Activated CD4-positive, alpha-beta T cell treated with anti-CD3 and anti-CD28 coated beads, Interleukin-2, amount 10 ng/mL, durations not matched to agents 24 days and 14 days (primary cell): ENCODE measurements at regions of chr12 and their contacts with region 1.

Region 1: GRCh38 chr12:11581179-11581755 is 68.2 kb upstream of the ETV6 start:
- DNase-seq: peak; percentile 90
- H3K4me3 Mint-ChIP-seq: no peak overlapping the region
- H3K27ac Mint-ChIP-seq: no peak overlapping the region
- H3K4me1 Mint-ChIP-seq: peaks cover 26% of the 10 kb centered on the region
- H3K27me3 Mint-ChIP-seq: peaks cover 8% of the 10 kb centered on the region

Region 2: GRCh38 chr12:11431486-11431885 is 149.8 kb before region 1 on chr12:
- intact Hi-C with region 1: no loop called
- DNase-seq: no peak
- H3K4me3 Mint-ChIP-seq: no peak overlapping the region
- H3K27ac Mint-ChIP-seq: no peak overlapping the region
- H3K4me1 Mint-ChIP-seq: peaks cover 2% of the 10 kb centered on the region
- H3K27me3 Mint-ChIP-seq: peaks cover 5% of the 10 kb centered on the region

Region 3: GRCh38 chr12:11553871-11554533 is 27.3 kb before region 1 on chr12:
- intact Hi-C with region 1: loop called (anchors 2 kb)
- DNase-seq: peak; percentile 88
- H3K4me3 Mint-ChIP-seq: peak overlapping the region; percentile 26
- H3K27ac Mint-ChIP-seq: no peak overlapping the region
- H3K4me1 Mint-ChIP-seq: peaks cover 22% of the 10 kb centered on the region
- H3K27me3 Mint-ChIP-seq: peaks cover 18% of the 10 kb centered on the region

Region 4: GRCh38 chr12:11771356-11771755 is 190.1 kb after region 1 on chr12:
- intact Hi-C with region 1: loop called (anchors 2 kb)
- DNase-seq: peak; percentile 65
- H3K4me3 Mint-ChIP-seq: peak overlapping the region; percentile 26
- H3K27ac Mint-ChIP-seq: peak overlapping the region; percentile 97
- H3K4me1 Mint-ChIP-seq: peaks cover 78% of the 10 kb centered on the region
- H3K27me3 Mint-ChIP-seq: no peaks in the 10 kb centered on the region

Region 5: DNA sequence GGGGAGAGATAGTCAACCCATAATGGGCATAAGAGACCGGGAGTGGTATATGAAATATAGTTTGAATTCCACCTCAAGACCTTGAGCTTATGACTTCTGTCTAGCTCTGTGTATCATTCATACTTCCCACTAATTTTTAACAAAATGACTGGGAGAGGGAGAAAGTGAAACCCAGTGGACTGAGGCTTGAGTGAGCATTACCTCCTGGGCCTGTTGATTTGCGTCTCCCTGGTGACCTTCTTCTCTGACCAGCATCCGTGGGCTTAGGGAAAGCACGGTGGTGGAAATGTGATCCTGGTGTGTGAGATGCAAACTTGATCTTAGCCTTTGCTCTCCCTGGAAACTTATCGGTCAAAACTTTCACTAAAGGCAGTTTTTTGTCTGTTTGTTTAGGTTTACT is 281.5 kb after region 1 on chr12:
- intact Hi-C with region 1: loop called (anchors 10 kb)
- DNase-seq: no peak
- H3K4me3 Mint-ChIP-seq: no peak overlapping the region
- H3K27ac Mint-ChIP-seq: peak overlapping the region; percentile 60
- H3K4me1 Mint-ChIP-seq: peaks cover 57% of the 10 kb centered on the region
- H3K27me3 Mint-ChIP-seq: no peaks in the 10 kb centered on the region

Region 6: DNA sequence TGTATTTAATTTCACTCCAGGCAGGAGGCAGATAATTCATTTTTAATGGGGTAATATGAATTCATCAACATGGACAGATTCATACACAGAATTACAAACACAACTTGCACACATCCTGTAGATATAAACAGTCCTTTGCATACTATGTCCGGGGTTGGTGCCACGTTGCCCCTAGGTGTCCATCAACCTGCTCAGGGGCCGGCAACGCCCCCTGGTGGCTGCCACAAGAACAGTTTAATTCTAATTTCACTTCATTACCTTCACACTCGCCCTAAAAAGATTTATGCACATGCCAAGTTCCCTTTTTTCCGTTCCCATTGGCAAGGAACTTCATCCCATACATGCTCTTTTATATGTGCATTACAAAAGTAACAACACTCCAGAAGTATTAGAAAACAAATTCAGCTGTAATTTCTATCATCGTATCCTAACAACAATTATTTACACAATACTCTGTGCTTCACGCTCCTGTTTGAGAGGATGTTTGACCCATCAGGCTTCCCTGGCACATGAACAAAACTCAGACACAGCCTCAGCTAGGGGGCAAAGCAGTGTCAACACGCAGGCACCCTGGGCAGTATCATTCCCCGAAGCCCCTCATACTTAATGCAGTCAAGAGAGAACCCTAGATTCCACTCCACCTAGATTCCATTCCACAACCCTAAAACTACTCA is 753.2 kb after region 1 on chr12:
- intact Hi-C with region 1: loop called (anchors 2 kb)
- DNase-seq: peak; percentile 88
- H3K4me3 Mint-ChIP-seq: no peak overlapping the region
- H3K27ac Mint-ChIP-seq: peak overlapping the region; percentile 18
- H3K4me1 Mint-ChIP-seq: peaks cover 36% of the 10 kb centered on the region
- H3K27me3 Mint-ChIP-seq: peaks cover 9% of the 10 kb centered on the region